ENCODE measurements at regions of chr4 and their contacts with region 1.

Region 1: GRCh38 chr4:6974138-6974848 is 64.7 kb downstream of the TBC1D14 start:
- DNase-seq: peak; percentile 40
- ATAC-seq: peak; percentile 86
- H3K4me3 ChIP-seq: no peak overlapping the region
- H3K27ac ChIP-seq: no peak overlapping the region
- H3K4me1 ChIP-seq: peaks cover 18% of the 10 kb centered on the region
- H3K27me3 ChIP-seq: no peaks in the 10 kb centered on the region
- CTCF ChIP-seq: peak; percentile 90 to 99 (median 99)
- EP300 ChIP-seq: no peak
- POLR2A ChIP-seq: no peak
- RAD21 ChIP-seq: peak; percentile 82

Region 2: DNA sequence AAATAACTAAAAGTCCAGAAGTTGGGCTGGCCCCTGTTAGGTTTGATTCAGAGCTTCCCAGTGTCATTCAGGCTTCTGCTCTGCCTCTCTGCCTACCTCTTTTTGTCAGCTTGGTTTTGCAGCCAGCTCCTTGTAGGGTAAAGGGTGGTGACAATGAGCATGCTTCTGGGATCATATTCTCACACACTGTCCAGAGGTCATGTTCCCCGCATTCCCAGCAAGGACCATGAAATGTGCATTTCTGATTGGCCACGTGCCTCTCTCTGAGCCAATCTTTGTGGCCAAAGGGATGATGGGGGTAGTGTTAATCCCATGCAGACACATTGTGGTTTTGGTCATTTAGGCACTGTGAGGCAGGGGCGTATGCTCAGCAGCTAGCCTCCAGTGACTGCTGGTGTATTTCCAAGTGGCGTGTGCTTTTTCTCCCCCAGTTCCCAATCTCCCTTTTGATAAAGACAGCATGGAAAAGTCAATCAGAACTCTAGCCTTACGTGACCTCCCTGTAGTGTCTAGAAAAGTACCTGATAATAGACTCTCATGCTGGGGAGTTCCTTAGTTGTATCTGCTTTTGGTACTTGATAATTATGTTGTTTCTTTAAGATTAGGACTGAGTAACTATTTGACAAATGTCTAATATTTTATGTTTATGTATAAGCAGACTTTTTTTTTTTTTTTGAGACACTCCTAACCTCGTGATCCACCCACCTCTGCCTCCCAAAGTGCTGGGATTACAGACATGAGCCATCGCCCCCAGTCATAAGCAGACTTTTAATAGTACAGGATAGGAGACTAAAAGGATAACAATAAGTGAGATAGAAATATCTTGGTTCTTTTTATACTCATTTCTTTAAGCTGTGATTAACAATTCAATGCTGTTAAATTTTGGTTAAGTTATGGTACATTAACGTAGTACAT is 134.0 kb before region 1 on chr4:
- CTCF ChIA-PET with region 1: no interaction called
- POLR2A ChIA-PET with region 1: no interaction called
- RAD21 ChIA-PET with region 1: no interaction called
- SMC1A ChIA-PET with region 1: no interaction called
- in situ Hi-C with region 1: no loop called
- intact Hi-C with region 1: no loop called
- DNase-seq: no peak
- ATAC-seq: no peak
- H3K4me3 ChIP-seq: no peak overlapping the region
- H3K27ac ChIP-seq: no peak overlapping the region
- H3K4me1 ChIP-seq: no peaks in the 10 kb centered on the region
- H3K27me3 ChIP-seq: no peaks in the 10 kb centered on the region
- CTCF ChIP-seq: no peak
- EP300 ChIP-seq: no peak
- POLR2A ChIP-seq: no peak
- RAD21 ChIP-seq: no peak

Region 3: GRCh38 chr4:6909073-6909965 is 65.0 kb before region 1 on chr4 and contains the start of gene TBC1D14:
- CTCF ChIA-PET with region 1: interaction called, 15 read pairs
- POLR2A ChIA-PET with region 1: interaction called, 5 read pairs
- RAD21 ChIA-PET with region 1: interaction called, 4 read pairs
- SMC1A ChIA-PET with region 1: interaction called, 4 read pairs
- in situ Hi-C with region 1: no loop called
- intact Hi-C with region 1: loop called (anchors 5 kb)
- DNase-seq: no peak
- ATAC-seq: peak; percentile 94
- H3K4me3 ChIP-seq: peak within 1 kb of the TSS; percentile 97
- H3K27ac ChIP-seq: peak within 1 kb of the TSS; percentile 96
- H3K4me1 ChIP-seq: peaks cover 17% of the 10 kb centered on the region
- H3K27me3 ChIP-seq: 0 out of 4 replicates have a peak, but pooled peaks cover 0 to 3% of the 10 kb centered on the region in 2 experiments
- CTCF ChIP-seq: no peak; a peak in 2 of 6 replicates
- EP300 ChIP-seq: no peak
- POLR2A ChIP-seq: peak; percentile 82
- RAD21 ChIP-seq: no peak
- polyA plus RNA-seq, gene TBC1D14: 0.87 to 1.1 TPM

Region 4: GRCh38 chr4:6942238-6942800 is 32.0 kb before region 1 on chr4:
- CTCF ChIA-PET with region 1: interaction called, 12 read pairs
- POLR2A ChIA-PET with region 1: no interaction called
- RAD21 ChIA-PET with region 1: interaction called, 3 read pairs
- SMC1A ChIA-PET with region 1: interaction called, 13 read pairs
- in situ Hi-C with region 1: no loop called
- intact Hi-C with region 1: no loop called
- DNase-seq: peak; percentile 66
- ATAC-seq: peak; percentile 75
- H3K4me3 ChIP-seq: peak overlapping the region; percentile 30; the same call in 1 of the 2 replicates
- H3K27ac ChIP-seq: peak overlapping the region; percentile 48
- H3K4me1 ChIP-seq: peaks cover 55% of the 10 kb centered on the region
- H3K27me3 ChIP-seq: no peaks in the 10 kb centered on the region
- CTCF ChIP-seq: no peak
- EP300 ChIP-seq: no peak
- POLR2A ChIP-seq: no peak
- RAD21 ChIP-seq: peak; percentile 17; the same call in 1 of the 2 replicates

Region 5: GRCh38 chr4:6963139-6963611 is 11.1 kb before region 1 on chr4:
- CTCF ChIA-PET with region 1: interaction called, 50 read pairs
- POLR2A ChIA-PET with region 1: no interaction called
- RAD21 ChIA-PET with region 1: interaction called, 4 read pairs
- SMC1A ChIA-PET with region 1: interaction called, 18 read pairs
- in situ Hi-C with region 1: no loop called
- intact Hi-C with region 1: no loop called
- DNase-seq: no peak
- ATAC-seq: peak; percentile 5; the same call in 2 of the 3 replicates
- H3K4me3 ChIP-seq: peak overlapping the region; percentile 71; the same call in 1 of the 2 replicates
- H3K27ac ChIP-seq: peak overlapping the region; percentile 95
- H3K4me1 ChIP-seq: peaks cover 28% of the 10 kb centered on the region
- H3K27me3 ChIP-seq: no peaks in the 10 kb centered on the region
- CTCF ChIP-seq: no peak
- EP300 ChIP-seq: no peak
- POLR2A ChIP-seq: no peak
- RAD21 ChIP-seq: no peak

Region 6: DNA sequence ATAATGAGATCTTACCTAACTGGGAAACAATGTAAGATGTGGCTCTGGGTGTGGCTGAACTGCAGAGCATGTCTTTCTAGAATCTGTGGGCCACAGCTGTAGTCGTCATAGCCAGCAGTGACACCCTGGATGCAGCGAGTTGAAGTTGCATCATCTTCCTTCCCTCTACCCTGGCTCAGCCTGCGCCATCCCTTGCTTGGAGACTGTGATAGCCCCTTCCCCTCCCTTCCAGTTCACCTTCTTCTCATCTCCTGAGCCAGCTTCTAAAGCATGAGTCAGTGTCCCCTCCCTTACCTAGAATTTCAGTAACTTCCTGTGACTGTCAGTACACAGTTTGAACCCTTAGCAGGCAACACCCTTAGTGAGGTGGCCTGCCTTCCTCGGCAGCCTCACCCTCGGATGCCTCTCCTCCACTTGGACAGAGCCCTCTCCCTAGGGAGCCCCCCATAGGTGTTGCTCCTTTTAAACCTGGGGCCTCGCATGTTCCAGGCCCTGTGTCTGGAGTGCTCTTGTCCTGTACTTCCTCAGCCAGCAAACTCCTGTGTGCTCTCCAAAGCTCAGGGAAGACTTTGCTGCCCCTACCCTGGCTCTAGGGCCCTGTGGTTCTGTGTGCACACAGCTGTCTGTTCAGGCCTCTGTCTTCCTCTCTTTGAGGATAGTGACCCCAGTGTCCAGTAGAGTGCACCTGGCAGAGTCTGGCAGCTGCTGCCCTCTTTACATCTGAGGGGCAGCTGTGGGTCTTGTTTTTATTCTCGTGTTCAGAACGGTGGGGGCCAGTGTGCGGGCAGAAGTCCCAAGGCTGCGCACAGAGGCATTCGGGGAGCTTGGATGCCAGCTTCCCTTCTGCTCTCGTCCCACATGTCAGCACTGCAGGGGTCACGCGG is 25.1 kb after region 1 on chr4:
- CTCF ChIA-PET with region 1: no interaction called
- POLR2A ChIA-PET with region 1: no interaction called
- RAD21 ChIA-PET with region 1: no interaction called
- SMC1A ChIA-PET with region 1: no interaction called
- in situ Hi-C with region 1: no loop called
- intact Hi-C with region 1: no loop called
- DNase-seq: no peak
- ATAC-seq: no peak
- H3K4me3 ChIP-seq: no peak overlapping the region
- H3K27ac ChIP-seq: no peak overlapping the region
- H3K4me1 ChIP-seq: no peaks in the 10 kb centered on the region
- H3K27me3 ChIP-seq: no peaks in the 10 kb centered on the region
- CTCF ChIP-seq: no peak
- EP300 ChIP-seq: no peak
- POLR2A ChIP-seq: no peak
- RAD21 ChIP-seq: no peak

Measured in GM12878 (cell line).